Right ventricle myocardium inferior (tissue), 1 donor: ENCODE measurements at regions of chr17 and their contacts with region 1.

Region 1: GRCh38 chr17:27293898-27294688 is at the start of gene WSB1:
- DNase-seq: peak; percentile 97
- ATAC-seq: peak; percentile 95
- total RNA-seq, gene WSB1: 48.7 TPM

Region 2: DNA sequence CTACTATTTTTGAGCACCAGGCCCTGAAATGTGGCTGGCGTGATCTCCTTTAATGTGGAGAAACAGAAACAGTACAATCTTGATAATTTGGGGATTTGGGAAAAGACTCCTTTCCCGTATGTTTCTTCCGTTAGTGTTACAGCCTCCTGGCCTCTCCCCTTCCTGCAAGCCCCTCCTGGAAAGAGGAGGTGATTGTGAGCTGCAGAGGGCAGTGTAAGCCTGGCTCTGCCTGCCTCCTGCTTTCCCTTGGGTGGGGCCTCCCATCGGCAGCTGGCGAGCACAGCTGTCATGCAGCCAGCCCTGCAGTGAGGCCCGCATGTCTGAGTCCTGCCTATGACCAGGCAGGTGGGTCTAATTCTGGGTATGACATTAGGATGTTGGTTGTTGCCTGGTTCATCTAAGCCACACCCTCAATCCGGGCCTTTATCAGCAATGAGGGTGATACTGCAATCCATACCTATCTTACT is 48.8 kb before region 1 on chr17:
- intact Hi-C with region 1: loop called (anchors 1 kb)
- DNase-seq: peak; percentile 90
- ATAC-seq: peak; percentile 91

Region 3: GRCh38 chr17:27256225-27257030 is 37.7 kb before region 1 on chr17:
- intact Hi-C with region 1: loop called (anchors 2 kb)
- DNase-seq: no peak
- ATAC-seq: no peak

Region 4: DNA sequence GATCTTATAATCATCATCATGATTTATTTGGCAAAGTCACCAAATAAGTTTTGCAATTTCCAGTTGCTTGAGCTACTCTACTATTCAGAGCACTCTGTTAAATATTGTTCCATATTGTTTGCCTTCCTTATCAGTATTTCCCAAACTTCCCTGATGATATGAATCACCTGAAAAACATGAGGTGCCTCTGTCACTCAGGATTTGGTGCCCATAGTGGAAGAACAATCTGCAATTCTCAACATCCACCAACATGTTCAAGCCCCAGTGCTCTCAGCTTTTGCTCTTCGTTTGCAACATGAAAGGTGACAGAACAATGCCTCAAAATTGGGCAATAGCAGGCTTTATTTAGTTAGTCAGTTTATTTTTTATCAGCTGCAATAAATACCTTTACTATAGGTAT is 28.8 kb before region 1 on chr17:
- intact Hi-C with region 1: loop called (anchors 2 kb)
- DNase-seq: no peak
- ATAC-seq: no peak

Region 5: DNA sequence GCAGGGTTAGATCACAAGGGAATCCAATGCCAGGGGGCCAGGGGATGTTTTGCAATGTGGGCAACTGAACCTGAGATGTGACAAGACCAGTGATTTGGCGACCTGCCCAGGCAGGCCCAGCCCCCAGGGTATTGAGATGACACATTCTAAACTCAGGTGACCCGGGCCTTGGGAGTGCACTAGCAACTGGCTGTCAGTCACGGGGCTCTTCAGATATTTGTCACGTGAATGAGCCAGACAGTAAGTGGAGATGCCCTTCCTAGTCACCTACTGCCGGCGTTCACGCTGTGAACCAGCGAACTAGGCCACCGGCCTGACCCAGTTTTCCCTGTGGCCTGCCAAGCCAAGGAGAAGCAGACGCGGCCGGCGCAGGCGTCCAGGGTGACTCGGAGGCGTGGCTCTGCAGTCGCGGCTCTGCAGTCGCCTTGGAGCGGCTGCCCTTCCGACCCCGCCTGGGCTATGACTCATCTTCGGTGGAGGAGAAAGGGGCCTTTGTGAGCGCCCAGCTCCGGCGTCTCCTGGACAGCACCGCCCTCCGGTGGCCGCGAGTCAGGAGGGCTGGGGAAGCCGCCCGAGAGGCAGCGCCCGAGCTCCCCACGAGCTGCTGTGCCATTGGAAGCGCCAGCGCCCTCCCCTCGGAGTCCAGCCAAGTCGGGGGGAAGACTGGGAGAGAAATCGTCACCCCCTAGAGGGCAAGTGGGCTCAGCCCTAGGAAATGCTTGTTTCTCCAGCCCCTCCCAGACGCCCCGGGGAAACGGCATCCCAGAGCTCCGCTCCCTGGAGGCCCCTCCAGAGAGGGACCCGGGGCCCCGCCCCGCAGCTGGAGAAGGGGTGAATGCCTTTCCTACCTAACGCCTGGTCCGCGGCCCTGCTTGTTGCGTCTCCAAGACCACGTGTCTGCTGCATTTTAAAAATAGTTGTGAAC is 38.7 kb after region 1 on chr17:
- intact Hi-C with region 1: loop called (anchors 1 kb)
- DNase-seq: peak; percentile 99
- ATAC-seq: peak; percentile 97